GM18951 (cell line): ENCODE measurements at regions of chr17 and their contacts with region 1.

Region 1: GRCh38 chr17:43219746-43220380 is 8.2 kb downstream of the TMEM106A start:
- POLR2A ChIP-seq: no peak

Region 2: GRCh38 chr17:43183921-43184320 is 35.9 kb before region 1 on chr17:
- in situ Hi-C with region 1: no loop called
- POLR2A ChIP-seq: no peak

Region 3: DNA sequence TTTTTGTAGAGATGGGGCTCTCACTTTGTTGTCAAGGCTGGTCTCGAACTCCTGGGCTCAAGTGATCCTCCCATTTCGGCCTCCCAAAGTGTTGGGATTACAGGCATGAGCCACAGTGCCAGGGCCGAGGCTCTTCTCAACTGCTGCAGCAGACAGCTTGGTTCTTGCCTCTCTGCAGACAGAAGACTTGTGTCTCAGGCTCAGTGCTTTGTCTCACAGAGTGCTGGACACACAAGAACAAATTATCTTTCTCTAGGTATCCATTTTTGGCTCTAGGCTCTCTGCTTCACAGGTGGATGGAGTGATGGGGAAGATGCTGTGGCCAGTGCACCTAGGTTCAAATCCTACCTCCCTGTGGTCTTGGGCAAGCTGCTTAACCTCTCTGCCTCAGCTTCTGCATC is 94.7 kb after region 1 on chr17:
- in situ Hi-C with region 1: loop called (anchors 5 kb)
- POLR2A ChIP-seq: no peak